Activated naive CD4-positive, alpha-beta T cell treated with anti-CD3 and anti-CD28 coated beads, Interleukin-2, amount 10 ng/mL, durations not matched to agents 7 days and 5 days (primary cell): ENCODE measurements at regions of chr17 and their contacts with region 1.

Region 1: GRCh38 chr17:40909351-40909750 is 24.3 kb upstream of the KRT20 start:
- DNase-seq: peak; percentile 70
- H3K4me3 Mint-ChIP-seq: no peak overlapping the region
- H3K27ac Mint-ChIP-seq: no peak overlapping the region
- H3K4me1 Mint-ChIP-seq: no peaks in the 10 kb centered on the region
- H3K27me3 Mint-ChIP-seq: peaks cover 34% of the 10 kb centered on the region

Region 2: GRCh38 chr17:40937384-40937819 is 28.1 kb after region 1 on chr17 and contains the start of gene KRT23:
- CTCF ChIA-PET with region 1: no interaction called
- DNase-seq: no peak
- H3K4me3 Mint-ChIP-seq: no peak within 1 kb of the TSS
- H3K27ac Mint-ChIP-seq: peak within 1 kb of the TSS; percentile 9
- H3K4me1 Mint-ChIP-seq: no peaks in the 10 kb centered on the region
- H3K27me3 Mint-ChIP-seq: peaks cover 19% of the 10 kb centered on the region

Region 3: GRCh38 chr17:41496820-41497408 is 587.6 kb after region 1 on chr17:
- CTCF ChIA-PET with region 1: interaction called, 11 read pairs
- DNase-seq: peak; percentile 84
- H3K4me3 Mint-ChIP-seq: no peak overlapping the region
- H3K27ac Mint-ChIP-seq: peak overlapping the region; percentile 43
- H3K4me1 Mint-ChIP-seq: peaks cover 7% of the 10 kb centered on the region
- H3K27me3 Mint-ChIP-seq: peaks cover 22% of the 10 kb centered on the region